ENCODE measurements at regions of chr7 and their contacts with region 1.

Region 1: GRCh38 chr7:129875745-129876411 is 76.9 kb downstream of the UBE2H start:
- DNase-seq: no peak
- H3K4me3 ChIP-seq: peak overlapping the region in 1 of 2 donors; percentile 41
- H3K27ac ChIP-seq: peak overlapping the region in 1 of 2 donors; percentile 43
- H3K4me1 ChIP-seq: peaks cover 0 to 39% of the 10 kb centered on the region in 2 donors
- H3K27me3 ChIP-seq: no peaks in the 10 kb centered on the region
- CTCF ChIP-seq: no peak

Region 2: GRCh38 chr7:129903935-129904334 is 28.1 kb after region 1 on chr7:
- intact Hi-C with region 1: no loop called
- DNase-seq: no peak
- H3K4me3 ChIP-seq: no peak overlapping the region
- H3K27ac ChIP-seq: no peak overlapping the region
- H3K4me1 ChIP-seq: peaks cover 3 to 24% of the 10 kb centered on the region in 2 donors
- H3K27me3 ChIP-seq: no peaks in the 10 kb centered on the region
- CTCF ChIP-seq: no peak

Region 3: GRCh38 chr7:129914536-129915272 is 38.8 kb after region 1 on chr7:
- intact Hi-C with region 1: loop called (anchors 5 kb)
- DNase-seq: no peak
- H3K4me3 ChIP-seq: no peak overlapping the region
- H3K27ac ChIP-seq: peak overlapping the region in 1 of 2 donors; percentile 8
- H3K4me1 ChIP-seq: peaks cover 0 to 45% of the 10 kb centered on the region in 2 donors
- H3K27me3 ChIP-seq: no peaks in the 10 kb centered on the region
- CTCF ChIP-seq: no peak